ENCODE measurements at regions of chr1 and their contacts with region 1.

Region 1: GRCh38 chr1:94527447-94528031 is 14.0 kb downstream of the F3 start:
- DNase-seq: no peak
- H3K4me3 ChIP-seq: no peak overlapping the region
- H3K27ac ChIP-seq: peak overlapping the region in 9 of 59 donors; percentile 1 to 42 (median 26)
- H3K27me3 ChIP-seq: no peaks in the 10 kb centered on the region
- CTCF ChIP-seq: no peak

Region 2: GRCh38 chr1:94191216-94191615 is 336.3 kb before region 1 on chr1:
- intact Hi-C with region 1: no loop called
- DNase-seq: no peak
- H3K4me3 ChIP-seq: no peak overlapping the region
- H3K27ac ChIP-seq: no peak overlapping the region
- H3K27me3 ChIP-seq: peaks cover 0 to 4% (median 0%) of the 10 kb centered on the region in 45 donors
- CTCF ChIP-seq: no peak

Region 3: DNA sequence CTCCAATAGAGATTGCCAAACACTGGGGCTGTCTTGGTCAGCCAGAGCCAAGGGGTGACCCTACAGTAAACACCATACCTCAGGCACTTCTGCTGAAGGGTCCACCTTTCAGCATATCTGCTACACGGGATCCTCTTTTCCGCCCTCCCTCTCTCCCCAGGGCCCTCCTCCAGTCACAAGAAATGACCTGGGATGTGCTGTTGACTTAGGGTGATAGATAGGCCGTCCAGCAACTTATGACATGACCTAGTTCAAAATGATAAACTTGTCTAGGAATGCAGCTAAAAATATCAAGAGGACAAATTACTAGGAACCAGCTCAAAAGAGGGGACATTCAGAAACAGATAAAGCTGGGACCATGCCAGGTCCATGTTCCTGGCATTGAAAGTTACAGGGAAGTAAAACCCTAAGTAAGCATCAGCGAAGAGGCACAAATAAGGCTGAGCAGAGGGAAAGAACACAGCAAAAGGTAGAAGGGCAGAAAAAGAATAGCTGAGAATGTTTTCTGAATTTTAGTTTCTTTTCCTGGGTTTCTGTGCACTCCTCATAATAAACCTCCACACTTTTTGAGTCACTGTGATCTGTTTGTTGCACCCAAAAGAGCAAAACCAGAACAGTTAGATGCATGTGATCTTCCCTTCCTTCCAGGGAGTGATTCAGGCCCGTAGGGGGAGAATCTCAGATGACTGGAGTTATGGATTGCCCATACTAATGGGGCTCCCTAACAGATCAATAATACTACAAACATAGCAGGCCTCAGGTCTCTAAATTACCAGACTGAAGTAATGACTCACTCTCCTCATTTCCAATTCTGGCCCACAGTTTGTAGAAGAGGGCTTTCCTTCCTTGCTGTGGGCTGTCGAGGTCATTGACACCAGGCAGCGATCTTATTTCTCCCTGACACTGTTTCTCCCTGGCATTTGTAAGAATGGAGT is 62.9 kb after region 1 on chr1:
- intact Hi-C with region 1: loop called (anchors 1 to 5 kb)
- DNase-seq: no peak
- H3K4me3 ChIP-seq: no peak overlapping the region
- H3K27ac ChIP-seq: peak overlapping the region in 51 of 59 donors; percentile 0 to 90 (median 63)
- H3K27me3 ChIP-seq: no peaks in the 10 kb centered on the region
- CTCF ChIP-seq: no peak

Region 4: DNA sequence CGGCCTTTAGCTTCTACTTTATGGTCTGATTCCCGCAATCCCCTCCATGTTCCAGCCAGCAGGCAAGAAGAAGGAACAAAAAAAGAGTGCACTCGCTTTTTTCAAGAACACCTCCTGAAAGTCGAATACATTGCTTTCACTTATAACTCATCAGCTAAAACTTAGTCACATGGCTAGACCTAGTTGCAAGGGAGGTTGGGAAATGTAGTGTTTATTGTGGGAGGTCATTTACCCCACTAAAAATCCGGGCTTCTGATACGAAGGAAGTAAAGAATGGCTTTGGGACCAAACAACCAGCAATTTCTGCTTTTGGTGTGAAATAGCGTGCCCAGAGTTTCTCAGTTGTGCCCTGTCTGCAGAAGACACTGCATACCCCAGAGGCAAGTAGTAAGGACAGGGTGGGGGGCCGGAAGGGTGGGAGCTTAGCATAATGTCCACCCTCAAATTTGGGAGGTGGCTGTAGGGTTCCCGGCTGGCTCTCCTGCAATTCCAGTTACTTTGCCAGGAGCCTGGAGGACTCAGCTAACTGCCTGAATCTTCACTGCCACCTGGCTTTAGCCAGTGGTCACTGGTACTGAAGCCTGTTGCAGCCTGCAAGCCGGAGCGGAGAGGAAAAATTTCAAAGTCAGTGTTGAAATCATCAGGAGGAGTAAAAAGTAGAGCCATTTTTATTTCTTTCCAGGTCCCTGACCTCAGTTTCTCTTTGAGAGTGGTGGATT is 71.7 kb after region 1 on chr1:
- intact Hi-C with region 1: loop called in 1 of 2 experiments (anchors 5 kb)
- DNase-seq: peak in 1 of 10 donors; percentile 36
- H3K4me3 ChIP-seq: peak overlapping the region in 14 of 59 donors; percentile 1 to 30 (median 16)
- H3K27ac ChIP-seq: peak overlapping the region in 3 of 59 donors; percentile 34 to 48 (median 44)
- H3K27me3 ChIP-seq: peaks cover 0 to 5% (median 0%) of the 10 kb centered on the region in 45 donors
- CTCF ChIP-seq: peak in 54 of 56 donors; percentile 12 to 73 (median 52)